CD8-positive, alpha-beta T cell (primary cell): ENCODE measurements at regions of chr5 and their contacts with region 1.

Region 1: DNA sequence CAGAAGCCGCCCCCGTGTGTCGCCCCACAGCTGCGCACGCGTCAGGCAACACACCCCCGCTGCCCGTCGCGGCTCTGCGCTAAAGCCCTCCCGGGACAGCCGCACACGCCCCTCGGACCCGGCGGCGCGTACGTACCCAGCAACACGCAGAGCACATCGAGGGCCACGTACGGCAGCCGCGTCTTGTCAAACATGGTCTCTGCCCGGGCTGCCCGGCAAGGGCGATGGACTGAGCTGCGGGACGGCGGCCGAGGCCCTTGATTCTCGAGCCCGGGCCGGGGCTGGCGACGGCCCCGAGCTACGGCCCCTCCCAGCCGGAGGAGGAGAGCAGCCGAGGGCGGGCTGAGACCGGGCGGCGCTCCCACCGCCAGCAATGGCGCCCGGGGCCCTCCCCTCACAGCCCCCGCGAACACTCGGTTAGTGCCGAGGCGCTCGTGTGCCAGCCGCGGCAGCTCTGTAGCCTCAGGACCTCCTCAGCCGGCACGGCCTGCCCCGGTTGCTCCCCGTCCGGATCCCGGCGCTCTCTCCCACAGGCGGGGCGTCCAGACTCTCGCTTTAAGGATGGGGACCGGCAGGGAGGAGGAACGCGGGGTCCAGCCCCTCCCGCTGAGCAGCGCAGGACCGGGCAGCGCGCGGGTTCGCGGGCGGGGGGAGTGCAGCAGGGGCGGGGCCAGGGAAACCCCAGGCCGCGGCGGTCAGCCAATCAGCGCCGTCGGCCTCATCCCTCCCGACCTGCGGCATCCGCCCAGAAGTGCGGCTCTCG is at the start of gene PLPP1:
- DNase-seq: peak; percentile 57 to 93 (median 79)
- ATAC-seq: peak; percentile 79
- H3K4me3 ChIP-seq: peak within 1 kb of the TSS; percentile 81 to 97
- H3K4me3 Mint-ChIP-seq: peak within 1 kb of the TSS; percentile 93
- H3K27ac ChIP-seq: peak within 1 kb of the TSS; percentile 81 to 87
- H3K27ac Mint-ChIP-seq: peak within 1 kb of the TSS; percentile 92
- H3K4me1 ChIP-seq: peaks cover 25% of the 10 kb centered on the region
- H3K4me1 Mint-ChIP-seq: peaks cover 37% of the 10 kb centered on the region
- H3K27me3 ChIP-seq: no peaks in the 10 kb centered on the region
- H3K27me3 Mint-ChIP-seq: no peaks in the 10 kb centered on the region
- CTCF ChIP-seq: no peak
- total RNA-seq, gene PLPP1: 5.8 to 5.9 TPM

Region 2: DNA sequence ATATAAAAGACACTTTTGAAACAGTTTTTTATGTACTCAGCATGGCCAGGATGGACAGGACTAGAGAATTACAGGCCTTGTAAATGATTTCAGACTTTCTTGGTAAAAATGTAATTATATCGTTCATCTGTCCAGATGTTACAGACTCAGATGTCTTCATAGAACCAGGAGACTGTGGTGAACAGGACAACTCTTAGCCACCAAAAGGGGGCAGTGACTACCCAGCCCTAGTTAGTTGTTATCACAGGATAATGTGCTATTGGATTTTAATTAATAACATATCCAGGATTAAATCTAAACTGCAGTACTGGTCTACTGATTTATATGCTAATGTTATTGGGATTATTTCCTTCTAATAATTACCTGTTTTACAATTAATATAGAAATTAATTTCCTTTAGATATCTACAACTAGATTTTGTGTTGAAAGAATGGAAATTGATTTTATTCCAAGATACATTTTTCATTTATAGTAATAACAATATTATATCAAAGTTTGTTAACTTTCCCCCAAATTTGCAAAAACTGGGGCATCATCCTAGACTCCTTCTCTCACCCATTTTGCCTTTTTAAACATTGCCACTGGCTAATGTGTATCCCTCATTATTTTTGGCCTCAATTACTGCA is 127.4 kb before region 1 on chr5:
- CTCF ChIA-PET with region 1: no interaction called
- POLR2A ChIA-PET with region 1: no interaction called
- intact Hi-C with region 1: loop called in 1 of 2 experiments (anchors 10 kb)
- DNase-seq: peak in 2 of 9 experiments; percentile 26 to 49
- ATAC-seq: peak; percentile 44
- H3K4me3 ChIP-seq: no peak overlapping the region
- H3K4me3 Mint-ChIP-seq: no peak overlapping the region
- H3K27ac ChIP-seq: no peak overlapping the region
- H3K27ac Mint-ChIP-seq: peak overlapping the region; percentile 43
- H3K4me1 ChIP-seq: peaks cover 7% of the 10 kb centered on the region
- H3K4me1 Mint-ChIP-seq: peaks cover 11% of the 10 kb centered on the region
- H3K27me3 ChIP-seq: no peaks in the 10 kb centered on the region
- H3K27me3 Mint-ChIP-seq: no peaks in the 10 kb centered on the region
- CTCF ChIP-seq: peak; percentile 21

Region 3: DNA sequence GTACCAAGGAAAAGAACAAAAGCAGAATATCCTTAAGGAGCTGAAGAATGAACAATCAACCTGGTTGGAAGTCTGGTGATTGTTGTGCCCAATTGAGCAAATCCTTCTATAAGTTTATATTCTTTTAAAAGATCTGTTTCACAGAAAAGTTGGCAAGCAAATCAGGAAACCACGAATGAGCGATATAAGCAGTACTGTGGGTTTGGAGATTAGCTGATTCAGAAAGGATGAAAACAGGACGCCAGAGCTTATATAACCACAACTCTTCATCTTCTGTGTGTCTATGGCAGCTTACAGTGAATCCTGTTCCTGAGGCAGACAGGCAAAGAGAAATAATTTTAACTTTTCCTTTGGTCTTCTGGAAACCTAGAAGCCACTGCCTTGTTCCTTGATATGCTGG is 115.8 kb after region 1 on chr5:
- CTCF ChIA-PET with region 1: no interaction called
- POLR2A ChIA-PET with region 1: interaction called, 3 read pairs
- intact Hi-C with region 1: loop called in 1 of 2 experiments (anchors 5 kb)
- DNase-seq: peak in 2 of 9 experiments; percentile 21 to 55
- ATAC-seq: peak; percentile 79
- H3K4me3 ChIP-seq: no peak overlapping the region
- H3K4me3 Mint-ChIP-seq: no peak overlapping the region
- H3K27ac ChIP-seq: no peak overlapping the region
- H3K27ac Mint-ChIP-seq: peak overlapping the region; percentile 24
- H3K4me1 ChIP-seq: peaks cover 15% of the 10 kb centered on the region
- H3K4me1 Mint-ChIP-seq: peaks cover 23% of the 10 kb centered on the region
- H3K27me3 ChIP-seq: no peaks in the 10 kb centered on the region
- H3K27me3 Mint-ChIP-seq: no peaks in the 10 kb centered on the region
- CTCF ChIP-seq: no peak

Region 4: GRCh38 chr5:55675119-55675518 is 140.5 kb after region 1 on chr5:
- CTCF ChIA-PET with region 1: no interaction called
- POLR2A ChIA-PET with region 1: no interaction called
- intact Hi-C with region 1: no loop called
- DNase-seq: no peak
- ATAC-seq: no peak
- H3K4me3 ChIP-seq: no peak overlapping the region
- H3K4me3 Mint-ChIP-seq: no peak overlapping the region
- H3K27ac ChIP-seq: no peak overlapping the region
- H3K27ac Mint-ChIP-seq: no peak overlapping the region
- H3K4me1 ChIP-seq: no peaks in the 10 kb centered on the region
- H3K4me1 Mint-ChIP-seq: peaks cover 2% of the 10 kb centered on the region
- H3K27me3 ChIP-seq: no peaks in the 10 kb centered on the region
- H3K27me3 Mint-ChIP-seq: no peaks in the 10 kb centered on the region
- CTCF ChIP-seq: no peak

Region 5: DNA sequence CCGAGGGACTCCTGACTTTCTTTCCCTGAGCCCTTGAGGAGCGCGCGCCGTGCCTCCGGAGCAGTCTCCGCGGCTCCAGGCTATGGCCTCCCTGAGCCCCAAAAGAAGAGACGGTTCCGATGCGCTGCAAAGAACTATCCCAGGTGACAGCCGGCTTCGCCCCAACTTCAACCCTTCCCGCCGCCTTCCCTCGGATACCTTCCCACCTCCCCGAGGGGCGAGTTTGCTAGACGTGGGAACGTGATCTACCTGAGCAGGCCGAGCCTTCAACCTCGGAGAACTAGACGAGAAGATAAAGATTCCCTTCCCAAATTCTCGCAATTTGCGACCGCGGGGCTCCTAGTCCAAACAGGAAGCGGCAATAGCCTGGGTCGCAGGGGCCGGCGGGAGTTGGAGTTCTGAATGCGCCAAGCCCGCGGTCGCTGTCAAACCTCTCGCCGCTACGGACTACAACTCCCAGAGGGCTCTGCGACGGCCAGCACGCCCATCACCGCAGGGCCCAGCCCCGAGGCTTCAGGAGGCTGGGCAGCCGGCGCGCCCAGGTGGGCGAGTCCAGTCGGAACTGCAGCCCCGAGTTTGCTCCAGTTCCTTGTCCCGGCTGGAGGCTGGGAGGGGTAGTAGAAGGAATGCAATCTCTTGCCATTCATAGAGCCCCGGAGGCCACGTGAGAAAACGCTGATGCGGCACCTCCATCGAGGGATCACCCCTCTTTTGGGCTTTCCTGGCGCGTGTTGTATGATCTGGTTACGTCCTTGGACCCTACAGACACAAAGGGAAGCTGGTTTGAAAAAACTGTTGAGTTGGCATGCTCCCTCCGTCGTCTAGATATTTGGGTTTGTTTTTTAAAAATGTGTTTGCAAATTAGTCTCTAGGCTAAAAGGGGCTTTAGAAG is 177.6 kb after region 1 on chr5 and contains the start of gene SLC38A9:
- CTCF ChIA-PET with region 1: no interaction called
- POLR2A ChIA-PET with region 1: no interaction called
- intact Hi-C with region 1: loop called (anchors 1 to 5 kb)
- DNase-seq: peak; percentile 83 to 94 (median 91)
- ATAC-seq: peak; percentile 99
- H3K4me3 ChIP-seq: peak within 1 kb of the TSS; percentile 92 to 100
- H3K4me3 Mint-ChIP-seq: peak within 1 kb of the TSS; percentile 98
- H3K27ac ChIP-seq: peak within 1 kb of the TSS; percentile 54 to 73
- H3K27ac Mint-ChIP-seq: peak within 1 kb of the TSS; percentile 88
- H3K4me1 ChIP-seq: peaks cover 9% of the 10 kb centered on the region
- H3K4me1 Mint-ChIP-seq: peaks cover 31% of the 10 kb centered on the region
- H3K27me3 ChIP-seq: no peaks in the 10 kb centered on the region
- H3K27me3 Mint-ChIP-seq: peaks cover 3% of the 10 kb centered on the region
- CTCF ChIP-seq: no peak
- total RNA-seq, gene SLC38A9: 6.0 to 6.8 TPM